ENCODE measurements at regions of chr6 and their contacts with region 1.

Region 1: GRCh38 chr6:70706491-70707123 is 38.9 kb downstream of the SMAP1 start:
- DNase-seq: no peak
- H3K4me3 ChIP-seq: no peak overlapping the region
- H3K27ac ChIP-seq: no peak overlapping the region
- H3K27me3 ChIP-seq: no peaks in the 10 kb centered on the region
- CTCF ChIP-seq: peak; percentile 61 to 97 (median 78)

Region 2: GRCh38 chr6:70884074-70884983 is 177.7 kb after region 1 on chr6:
- intact Hi-C with region 1: loop called (anchors 1 to 5 kb)
- DNase-seq: peak in 9 of 10 donors; percentile 24 to 68 (median 49)
- H3K4me3 ChIP-seq: no peak overlapping the region
- H3K27ac ChIP-seq: no peak overlapping the region
- H3K27me3 ChIP-seq: peaks cover 0 to 3% (median 0%) of the 10 kb centered on the region in 45 donors
- CTCF ChIP-seq: peak; percentile 78 to 97 (median 93)

Region 3: GRCh38 chr6:70955441-70956190 is 249.0 kb after region 1 on chr6:
- intact Hi-C with region 1: loop called (anchors 5 kb)
- DNase-seq: peak; percentile 69 to 88 (median 84)
- H3K4me3 ChIP-seq: peak overlapping the region; percentile 53 to 87 (median 71)
- H3K27ac ChIP-seq: peak overlapping the region in 8 of 59 donors; percentile 4 to 75 (median 42)
- H3K27me3 ChIP-seq: peaks cover 0 to 14% (median 0%) of the 10 kb centered on the region in 45 donors
- CTCF ChIP-seq: peak; percentile 59 to 95 (median 83)

Region 4: GRCh38 chr6:71012866-71013469 is 306.4 kb after region 1 on chr6:
- intact Hi-C with region 1: loop called (anchors 5 to 10 kb)
- DNase-seq: peak in 1 of 10 donors; percentile 35
- H3K4me3 ChIP-seq: no peak overlapping the region
- H3K27ac ChIP-seq: no peak overlapping the region
- H3K27me3 ChIP-seq: peaks cover 0 to 5% (median 0%) of the 10 kb centered on the region in 45 donors
- CTCF ChIP-seq: peak; percentile 55 to 90 (median 77)